Naive thymus-derived CD4-positive, alpha-beta T cell (primary cell): ENCODE measurements at regions of chr4 and their contacts with region 1.

Region 1: DNA sequence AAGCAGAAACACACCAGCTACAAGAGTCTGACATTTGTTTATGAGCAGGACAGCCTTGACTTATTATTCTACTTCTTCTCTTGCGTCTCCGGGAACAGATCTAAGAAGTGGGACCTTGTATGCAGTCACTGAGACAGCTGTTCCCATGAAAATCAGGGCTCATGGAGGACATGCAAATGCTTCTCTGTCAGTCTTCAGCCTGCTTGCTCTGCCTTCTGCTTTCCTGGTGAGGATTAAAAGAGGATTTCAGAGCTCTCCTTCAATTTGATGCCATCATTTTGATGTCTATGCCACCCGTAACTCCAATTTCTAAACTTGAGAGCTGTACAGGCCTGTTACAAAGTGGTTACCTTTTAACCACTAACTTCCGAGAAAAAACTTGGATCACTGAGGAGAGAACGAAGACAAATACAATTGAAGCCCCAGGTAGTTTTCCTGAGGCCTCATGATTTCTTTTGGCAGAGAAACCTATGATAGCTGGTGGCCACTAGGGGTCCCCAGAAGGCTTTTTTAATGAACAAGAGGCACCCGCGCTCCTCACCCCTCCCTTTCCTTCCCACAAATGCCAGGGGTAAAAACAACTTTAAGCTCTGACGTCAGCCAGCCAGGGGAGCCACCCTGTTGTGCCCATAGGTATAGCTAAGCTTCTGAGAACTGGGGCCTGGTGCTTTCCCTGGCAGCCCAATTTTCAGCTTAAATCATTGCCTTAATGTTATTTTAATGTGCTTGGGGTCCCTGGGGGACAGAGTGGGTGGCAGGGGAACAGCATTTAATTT is 97.0 kb downstream of the DDIT4L start:
- DNase-seq: peak; percentile 42 to 96 (median 89)
- ATAC-seq: peak; percentile 99
- H3K4me3 ChIP-seq: no peak overlapping the region
- H3K4me3 Mint-ChIP-seq: peak overlapping the region in 4 of 10 donors; percentile 8 to 70 (median 48)
- H3K27ac ChIP-seq: peak overlapping the region; percentile 55
- H3K27ac Mint-ChIP-seq: peak overlapping the region; percentile 77 to 99 (median 95)
- H3K4me1 ChIP-seq: peaks cover 0 to 16% of the 10 kb centered on the region in 2 donors
- H3K4me1 Mint-ChIP-seq: peaks cover 9 to 48% (median 20%) of the 10 kb centered on the region in 7 donors
- H3K27me3 ChIP-seq: no peaks in the 10 kb centered on the region
- H3K27me3 Mint-ChIP-seq: no peaks in the 10 kb centered on the region

Region 2: DNA sequence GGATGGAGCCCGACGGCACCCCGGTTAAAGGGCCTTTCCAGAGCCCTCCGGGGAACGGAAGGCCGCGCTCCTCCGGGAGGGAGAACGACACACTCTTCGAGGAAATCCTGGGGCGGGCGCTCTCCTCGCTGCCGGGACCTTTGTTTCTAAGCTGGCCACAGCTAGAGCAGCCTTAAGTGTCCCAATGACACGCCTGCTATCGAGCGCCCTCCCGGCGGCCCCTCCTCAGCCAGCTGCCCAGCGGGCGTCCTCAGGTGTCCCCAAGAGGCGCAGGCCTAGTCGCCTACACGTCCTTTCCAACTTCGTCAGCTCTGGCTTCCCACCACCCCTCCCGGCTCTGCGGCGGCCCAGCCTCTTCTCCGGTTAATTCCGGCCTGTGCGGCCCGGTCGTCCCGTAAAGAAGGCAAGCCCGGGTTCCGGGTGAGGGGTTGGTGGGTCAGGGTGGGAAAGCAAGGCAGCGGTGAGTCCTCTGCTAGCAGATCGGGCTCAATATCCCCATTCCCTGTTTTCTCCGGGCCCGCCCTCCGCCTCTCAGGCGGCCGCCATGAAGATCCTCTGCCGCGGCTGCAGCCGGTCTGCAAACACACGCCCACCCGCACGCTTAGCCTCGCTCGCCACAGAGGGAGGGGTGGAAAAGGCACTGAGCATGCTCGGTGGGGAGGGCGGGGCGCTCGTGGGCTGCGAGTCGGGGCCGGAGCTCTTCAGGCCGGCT is 1832.5 kb before region 1 on chr4:
- CTCF ChIA-PET with region 1: interaction called, 4 read pairs
- POLR2A ChIA-PET with region 1: no interaction called
- intact Hi-C with region 1: loop called in 1 of 2 experiments (anchors 10 kb)
- DNase-seq: peak in 6 of 9 donors; percentile 69 to 95 (median 78)
- ATAC-seq: peak; percentile 85
- H3K4me3 ChIP-seq: peak overlapping the region; percentile 90
- H3K4me3 Mint-ChIP-seq: peak overlapping the region; percentile 92 to 98 (median 94)
- H3K27ac ChIP-seq: peak overlapping the region; percentile 86
- H3K27ac Mint-ChIP-seq: peak overlapping the region; percentile 84 to 97 (median 92)
- H3K4me1 ChIP-seq: peaks cover 5 to 12% of the 10 kb centered on the region in 2 donors
- H3K4me1 Mint-ChIP-seq: peaks cover 31 to 60% (median 54%) of the 10 kb centered on the region in 7 donors
- H3K27me3 ChIP-seq: no peaks in the 10 kb centered on the region
- H3K27me3 Mint-ChIP-seq: no peaks in the 10 kb centered on the region

Region 3: DNA sequence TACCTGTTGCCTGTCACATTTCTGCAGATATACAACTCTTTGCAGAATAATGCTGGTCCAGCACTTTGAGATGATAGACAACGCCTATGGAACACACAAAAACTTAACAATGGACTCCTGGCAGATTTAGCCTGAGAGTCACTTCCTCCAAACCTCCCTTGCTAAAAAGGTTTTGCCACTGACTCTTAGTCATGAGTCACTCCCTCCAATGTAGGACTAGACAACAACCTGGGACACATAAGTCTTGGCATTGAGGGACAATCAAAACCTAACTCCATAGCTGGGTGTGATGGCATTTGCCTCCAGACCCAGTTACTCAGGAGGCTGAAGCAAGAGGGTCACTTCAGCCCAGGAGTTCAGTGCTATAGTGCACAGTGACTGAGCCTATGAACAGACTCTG is 1142.4 kb before region 1 on chr4:
- CTCF ChIA-PET with region 1: no interaction called
- POLR2A ChIA-PET with region 1: no interaction called
- intact Hi-C with region 1: no loop called
- DNase-seq: no peak
- ATAC-seq: no peak
- H3K4me3 ChIP-seq: no peak overlapping the region
- H3K4me3 Mint-ChIP-seq: no peak overlapping the region
- H3K27ac ChIP-seq: no peak overlapping the region
- H3K27ac Mint-ChIP-seq: no peak overlapping the region
- H3K4me1 ChIP-seq: no peaks in the 10 kb centered on the region
- H3K4me1 Mint-ChIP-seq: no peaks in the 10 kb centered on the region
- H3K27me3 ChIP-seq: no peaks in the 10 kb centered on the region
- H3K27me3 Mint-ChIP-seq: peaks cover 0 to 6% (median 4%) of the 10 kb centered on the region in 5 donors

Region 4: GRCh38 chr4:99816545-99817308 is 276.6 kb before region 1 on chr4 and contains the start of gene DAPP1:
- CTCF ChIA-PET with region 1: no interaction called
- POLR2A ChIA-PET with region 1: interaction called, 3 read pairs
- intact Hi-C with region 1: loop called (anchors 10 kb)
- DNase-seq: peak; percentile 44 to 88 (median 84)
- ATAC-seq: peak; percentile 95
- H3K4me3 ChIP-seq: peak within 1 kb of the TSS; percentile 71
- H3K4me3 Mint-ChIP-seq: peak within 1 kb of the TSS; percentile 71 to 95 (median 92)
- H3K27ac ChIP-seq: peak within 1 kb of the TSS; percentile 77
- H3K27ac Mint-ChIP-seq: peak within 1 kb of the TSS; percentile 87 to 98 (median 96)
- H3K4me1 ChIP-seq: peaks cover 16 to 32% of the 10 kb centered on the region in 2 donors
- H3K4me1 Mint-ChIP-seq: peaks cover 41 to 72% (median 63%) of the 10 kb centered on the region in 7 donors
- H3K27me3 ChIP-seq: no peaks in the 10 kb centered on the region
- H3K27me3 Mint-ChIP-seq: no peaks in the 10 kb centered on the region
- total RNA-seq, gene DAPP1: 10.9 to 49.6 (median 20.7) TPM

Region 5: GRCh38 chr4:100168521-100168920 is 75.2 kb after region 1 on chr4:
- CTCF ChIA-PET with region 1: no interaction called
- POLR2A ChIA-PET with region 1: no interaction called
- intact Hi-C with region 1: loop called in 1 of 2 experiments (anchors 5 kb)
- DNase-seq: no peak
- ATAC-seq: no peak
- H3K4me3 ChIP-seq: no peak overlapping the region
- H3K4me3 Mint-ChIP-seq: no peak overlapping the region
- H3K27ac ChIP-seq: no peak overlapping the region
- H3K27ac Mint-ChIP-seq: no peak overlapping the region
- H3K4me1 ChIP-seq: no peaks in the 10 kb centered on the region
- H3K4me1 Mint-ChIP-seq: peaks cover 0 to 35% (median 0%) of the 10 kb centered on the region in 7 donors
- H3K27me3 ChIP-seq: no peaks in the 10 kb centered on the region
- H3K27me3 Mint-ChIP-seq: peaks cover 0 to 9% (median 0%) of the 10 kb centered on the region in 5 donors

Region 6: GRCh38 chr4:100450449-100450848 is 357.2 kb after region 1 on chr4:
- CTCF ChIA-PET with region 1: no interaction called
- POLR2A ChIA-PET with region 1: no interaction called
- intact Hi-C with region 1: loop called in 1 of 2 experiments (anchors 10 kb)
- DNase-seq: no peak
- ATAC-seq: no peak
- H3K4me3 ChIP-seq: no peak overlapping the region
- H3K4me3 Mint-ChIP-seq: no peak overlapping the region
- H3K27ac ChIP-seq: no peak overlapping the region
- H3K27ac Mint-ChIP-seq: no peak overlapping the region
- H3K4me1 ChIP-seq: no peaks in the 10 kb centered on the region
- H3K4me1 Mint-ChIP-seq: peaks cover 0 to 4% (median 0%) of the 10 kb centered on the region in 7 donors
- H3K27me3 ChIP-seq: no peaks in the 10 kb centered on the region
- H3K27me3 Mint-ChIP-seq: peaks cover 0 to 6% (median 4%) of the 10 kb centered on the region in 5 donors

Region 7: GRCh38 chr4:100848869-100849268 is 755.6 kb after region 1 on chr4:
- CTCF ChIA-PET with region 1: no interaction called
- POLR2A ChIA-PET with region 1: no interaction called
- intact Hi-C with region 1: loop called in 1 of 2 experiments (anchors 5 kb)
- DNase-seq: peak in 1 of 9 donors; percentile 1
- ATAC-seq: no peak
- H3K4me3 ChIP-seq: no peak overlapping the region
- H3K4me3 Mint-ChIP-seq: no peak overlapping the region
- H3K27ac ChIP-seq: no peak overlapping the region
- H3K27ac Mint-ChIP-seq: no peak overlapping the region
- H3K4me1 ChIP-seq: no peaks in the 10 kb centered on the region
- H3K4me1 Mint-ChIP-seq: no peaks in the 10 kb centered on the region
- H3K27me3 ChIP-seq: no peaks in the 10 kb centered on the region
- H3K27me3 Mint-ChIP-seq: no peaks in the 10 kb centered on the region

Region 8: DNA sequence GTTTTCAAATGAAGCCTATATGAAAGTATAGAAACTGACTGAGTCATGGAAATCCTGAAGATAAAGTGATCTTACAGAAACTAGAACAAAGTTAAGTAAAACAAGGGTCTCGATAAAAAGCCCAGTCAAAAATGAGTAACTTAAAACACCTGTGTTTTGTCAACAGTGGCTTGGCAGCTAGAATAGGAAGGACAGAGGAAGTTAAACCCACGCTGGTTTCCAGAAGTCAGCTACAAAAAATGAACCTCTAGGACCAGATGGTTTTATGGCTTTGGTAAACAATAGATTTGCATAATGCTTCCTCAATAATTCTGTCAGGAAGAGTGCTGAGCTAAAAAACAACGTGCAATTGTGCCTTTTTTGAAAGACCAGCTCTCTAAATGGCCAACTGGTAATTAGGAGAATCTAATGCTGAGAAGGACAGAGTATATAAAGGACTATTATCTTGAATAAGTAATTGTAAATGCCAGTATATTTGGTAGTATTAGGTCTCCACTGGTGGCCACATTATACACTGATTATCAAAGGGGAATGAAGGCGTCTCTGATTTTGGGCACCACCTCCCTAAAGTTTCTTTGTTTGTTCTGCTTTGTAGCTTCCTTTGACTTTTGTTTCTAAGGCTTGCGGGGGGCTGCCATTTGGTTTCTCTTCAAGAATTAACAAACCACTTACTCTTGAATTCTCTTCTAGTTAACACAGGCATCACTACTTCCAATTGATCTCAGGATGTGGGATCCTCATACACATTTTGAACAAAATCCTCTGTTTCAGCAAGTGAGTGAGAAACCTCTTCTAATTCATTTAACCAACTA is 1326.3 kb after region 1 on chr4:
- CTCF ChIA-PET with region 1: no interaction called
- POLR2A ChIA-PET with region 1: no interaction called
- intact Hi-C with region 1: loop called in 1 of 2 experiments (anchors 5 kb)
- DNase-seq: peak in 5 of 9 donors; percentile 7 to 26 (median 24)
- ATAC-seq: no peak
- H3K4me3 ChIP-seq: no peak overlapping the region
- H3K4me3 Mint-ChIP-seq: peak overlapping the region in 6 of 10 donors; percentile 1 to 70 (median 12)
- H3K27ac ChIP-seq: no peak overlapping the region
- H3K27ac Mint-ChIP-seq: peak overlapping the region in 2 of 9 donors; percentile 41 to 65
- H3K4me1 ChIP-seq: peaks cover 33 to 36% of the 10 kb centered on the region in 2 donors
- H3K4me1 Mint-ChIP-seq: peaks cover 26 to 53% (median 39%) of the 10 kb centered on the region in 7 donors
- H3K27me3 ChIP-seq: peaks cover 0 to 11% of the 10 kb centered on the region in 2 donors
- H3K27me3 Mint-ChIP-seq: peaks cover 32 to 62% (median 41%) of the 10 kb centered on the region in 5 donors